ENCODE measurements at regions of chr20 and their contacts with region 1.

Region 1: DNA sequence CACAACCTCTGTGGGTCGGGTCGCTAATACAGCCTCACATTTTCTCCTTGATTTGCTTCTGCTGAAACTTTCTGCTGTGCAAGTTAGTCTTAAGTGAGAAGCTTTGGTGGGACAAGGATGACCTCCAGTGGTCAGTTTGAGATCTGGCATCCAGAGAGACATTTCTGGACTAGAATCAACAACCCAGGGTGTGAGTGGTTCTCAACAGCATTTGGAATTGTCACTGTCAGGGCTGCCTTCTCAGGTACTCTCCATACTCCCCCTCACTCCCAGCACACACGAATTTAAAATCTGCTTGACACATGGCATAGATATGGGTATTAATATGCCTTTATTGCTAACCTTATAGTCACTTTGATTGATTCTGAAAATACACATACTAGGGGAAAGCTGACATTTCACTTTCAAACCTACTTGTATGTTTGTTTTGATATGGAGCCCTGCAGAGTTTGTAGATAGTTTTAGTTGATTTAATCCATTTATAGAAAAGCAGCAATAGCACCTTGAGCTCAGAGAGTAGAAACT is 13.2 kb downstream of the OTOR start:
- DNase-seq: no peak
- ATAC-seq: peak; percentile 75
- H3K4me3 ChIP-seq: no peak overlapping the region
- H3K27ac ChIP-seq: no peak overlapping the region
- H3K4me1 ChIP-seq: no peaks in the 10 kb centered on the region
- H3K27me3 ChIP-seq: no peaks in the 10 kb centered on the region

Region 2: DNA sequence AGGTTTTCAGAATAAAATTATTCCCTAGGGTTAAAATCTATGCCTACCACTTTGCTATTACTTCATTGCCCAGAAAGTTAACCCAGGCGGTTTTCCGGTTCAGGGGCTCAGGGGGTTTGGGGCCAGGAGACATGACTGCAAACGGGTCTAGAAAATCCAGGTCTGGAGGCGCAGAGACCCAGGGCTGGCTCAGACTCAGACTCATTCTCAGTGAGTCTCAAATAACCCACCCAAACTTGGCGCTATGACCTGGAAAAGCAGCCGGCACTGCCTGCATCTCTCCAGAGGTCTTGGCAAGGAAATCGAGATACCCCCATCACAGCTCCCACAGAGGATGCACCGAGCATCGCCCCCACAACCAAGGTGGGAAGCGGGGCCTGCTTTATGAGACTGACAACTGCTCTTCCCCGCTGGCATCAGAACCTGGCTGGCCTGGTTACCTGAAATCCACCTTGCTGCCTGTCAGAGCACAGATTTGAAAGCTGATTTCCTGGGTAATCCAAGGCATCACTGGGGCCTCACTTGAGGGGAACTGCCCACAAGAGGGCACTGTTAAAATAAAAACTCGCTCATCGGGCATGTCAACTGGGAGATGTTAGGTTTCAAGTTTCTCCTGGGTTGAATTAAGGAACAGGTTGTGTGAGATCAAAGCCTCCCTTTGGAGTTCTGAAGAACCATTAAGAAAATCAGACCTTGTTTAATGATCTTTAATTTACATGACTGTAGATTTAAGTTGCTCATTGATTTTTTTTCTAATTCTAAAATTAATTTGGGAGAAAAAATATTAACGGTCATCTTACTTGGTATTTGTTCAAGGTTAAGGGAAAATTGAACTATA is 243.2 kb before region 1 on chr20:
- intact Hi-C with region 1: loop called (anchors 5 to 10 kb)
- DNase-seq: no peak
- ATAC-seq: peak; percentile 52
- H3K4me3 ChIP-seq: no peak overlapping the region
- H3K27ac ChIP-seq: no peak overlapping the region
- H3K4me1 ChIP-seq: no peaks in the 10 kb centered on the region
- H3K27me3 ChIP-seq: no peaks in the 10 kb centered on the region